H1 (cell line): ENCODE measurements at regions of chr1 and their contacts with region 1.

Region 1: GRCh38 chr1:8858888-8859706 is 19.4 kb downstream of the ENO1 start:
- DNase-seq: no peak
- H3K4me3 ChIP-seq: no peak overlapping the region
- H3K27ac ChIP-seq: no peak overlapping the region
- H3K4me1 ChIP-seq: peaks cover 2 to 6% (median 3%) of the 10 kb centered on the region in 4 experiments; a peak in 6 of 7 replicates
- H3K27me3 ChIP-seq: no peaks in the 10 kb centered on the region
- CTCF ChIP-seq: peak in 2 of 3 experiments; percentile 61 to 72; a peak in 3 of 4 replicates
- EP300 ChIP-seq: no peak
- POLR2A ChIP-seq: peak; percentile 23 to 31; a peak in 2 of 3 replicates
- RAD21 ChIP-seq: peak; percentile 48 to 62; a peak in 3 of 4 replicates

Region 2: DNA sequence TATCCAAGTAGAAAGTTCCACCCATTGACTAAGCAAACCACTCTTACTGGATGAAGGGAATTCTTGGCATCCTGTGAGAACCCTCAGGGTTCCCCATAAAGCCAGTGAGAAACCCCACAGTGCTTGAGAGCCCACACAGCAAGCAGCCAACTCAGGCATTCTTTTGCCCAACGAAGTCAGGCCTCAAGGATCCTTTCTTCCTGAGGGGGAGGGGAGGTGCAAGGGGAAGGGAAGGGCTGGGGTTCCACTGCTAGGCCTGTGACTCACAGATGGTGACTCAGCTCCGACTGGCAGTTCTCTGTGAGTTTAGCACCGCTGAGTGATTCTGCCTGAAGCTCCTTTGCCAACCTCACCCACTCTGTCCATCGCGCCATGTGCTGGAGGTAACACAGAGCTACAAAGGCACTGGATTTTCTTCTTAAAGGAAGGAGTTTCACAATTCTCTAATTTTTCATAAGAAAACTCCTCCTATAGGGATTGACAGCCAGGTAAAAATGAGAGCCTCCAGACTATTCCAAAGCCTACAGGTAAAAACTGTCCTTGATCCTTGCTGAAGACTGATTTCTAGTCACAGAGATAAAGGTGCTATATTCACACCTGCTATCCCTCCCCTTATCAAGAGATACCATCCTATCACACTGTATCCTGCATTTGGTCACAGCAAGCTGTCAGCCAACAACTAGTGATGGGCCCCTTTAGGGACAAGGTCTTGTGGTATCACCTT is 14.6 kb after region 1 on chr1:
- CTCF ChIA-PET with region 1: interaction called, 47 read pairs
- POLR2A ChIA-PET with region 1: interaction called, 880 read pairs
- DNase-seq: peak; percentile 63 to 84
- H3K4me3 ChIP-seq: peak overlapping the region in 1 of 4 experiments; percentile 25; a peak in 1 of 8 replicates
- H3K27ac ChIP-seq: peak overlapping the region; percentile 59; the same call in 1 of the 2 replicates
- H3K4me1 ChIP-seq: peaks cover 12 to 28% (median 16%) of the 10 kb centered on the region in 4 experiments
- H3K27me3 ChIP-seq: no peaks in the 10 kb centered on the region
- CTCF ChIP-seq: no peak
- EP300 ChIP-seq: peak; percentile 9 to 14; a peak in 1 of 3 replicates
- POLR2A ChIP-seq: peak in 1 of 2 experiments; percentile 62; a peak in 2 of 3 replicates
- RAD21 ChIP-seq: peak in 1 of 2 experiments; percentile 18; a peak in 1 of 4 replicates